A549 (cell line): ENCODE measurements at regions of chr18 and their contacts with region 1.

Region 1: GRCh38 chr18:63422087-63422809 is at the start of gene VPS4B:
- DNase-seq: peak; percentile 81 to 98
- ATAC-seq: peak; percentile 98
- H3K4me3 ChIP-seq: peak within 1 kb of the TSS; percentile 78
- H3K27ac ChIP-seq: peak within 1 kb of the TSS; percentile 93 to 99
- H3K4me1 ChIP-seq: peaks cover 9% of the 10 kb centered on the region; the same call in 1 of the 3 replicates
- CTCF ChIP-seq: no peak
- EP300 ChIP-seq: no peak
- POLR2A ChIP-seq: peak; percentile 59
- RAD21 ChIP-seq: no peak
- polyA plus RNA-seq, gene VPS4B: 19.8 and 24.2 TPM in 2 replicates

Region 2: GRCh38 chr18:63367053-63367953 is 54.9 kb before region 1 on chr18 and contains the start of gene KDSR:
- CTCF ChIA-PET with region 1: no interaction called
- POLR2A ChIA-PET with region 1: interaction called, 16 read pairs
- DNase-seq: peak; percentile 84 to 96
- ATAC-seq: peak; percentile 95 to 97
- H3K4me3 ChIP-seq: peak within 1 kb of the TSS; percentile 95
- H3K27ac ChIP-seq: peak within 1 kb of the TSS; percentile 82 to 94
- H3K4me1 ChIP-seq: 0 out of 3 replicates have a peak, but pooled peaks cover 6% of the 10 kb centered on the region
- CTCF ChIP-seq: no peak
- EP300 ChIP-seq: no peak
- POLR2A ChIP-seq: peak; percentile 77
- RAD21 ChIP-seq: no peak
- polyA plus RNA-seq, gene KDSR: 21.2 and 22.6 TPM in 2 replicates